ENCODE measurements at regions of chr20 and their contacts with region 1.

Region 1: DNA sequence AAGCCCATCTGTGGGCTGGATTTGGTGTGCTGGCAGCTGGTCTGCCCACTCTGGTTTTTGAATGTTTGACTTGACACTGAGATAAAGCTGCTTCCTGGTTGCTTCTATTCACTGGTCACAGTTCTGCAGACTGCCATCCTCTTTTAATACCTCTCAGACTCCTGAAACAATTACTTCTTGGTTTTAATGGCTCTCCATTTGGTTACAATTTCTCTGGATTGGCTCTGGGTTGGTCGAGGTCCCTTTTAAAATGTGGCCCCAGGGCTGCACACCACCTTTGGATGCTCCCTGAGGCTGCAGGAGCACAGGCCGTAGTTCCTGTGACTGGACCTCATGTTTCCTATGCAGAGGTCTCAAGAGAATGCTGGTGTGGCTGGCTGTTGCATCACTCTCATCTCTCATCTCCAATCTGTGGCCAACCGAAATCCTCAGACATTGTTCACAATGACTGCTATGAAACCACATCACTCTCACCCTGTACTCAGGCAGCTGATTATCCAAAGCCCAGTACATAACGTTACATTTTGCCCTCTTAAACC is 98.5 kb downstream of the INSM1 start:
- DNase-seq: peak; percentile 28
- H3K4me3 ChIP-seq: no peak overlapping the region
- H3K27ac ChIP-seq: no peak overlapping the region
- H3K4me1 ChIP-seq: no peaks in the 10 kb centered on the region
- H3K27me3 ChIP-seq: no peaks in the 10 kb centered on the region
- CTCF ChIP-seq: no peak

Region 2: DNA sequence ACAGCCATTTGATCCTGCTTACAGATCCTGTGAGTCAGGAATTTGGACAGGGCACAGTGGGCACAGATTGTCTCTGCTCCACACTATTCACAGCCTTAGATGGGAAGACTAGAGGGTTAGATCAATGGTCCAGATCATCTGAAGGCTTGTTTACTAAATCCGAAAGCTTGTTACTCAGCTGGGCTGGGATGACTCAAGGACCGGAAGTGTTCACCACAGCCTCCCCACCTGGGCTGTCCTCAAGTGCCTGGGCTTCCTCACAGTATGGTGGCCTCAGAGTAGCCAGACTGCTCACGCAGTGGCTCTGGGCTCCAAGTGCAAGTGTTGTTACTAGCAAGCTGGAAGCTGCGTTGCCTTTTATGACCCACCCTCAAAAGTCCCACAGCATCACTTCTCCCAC is 173.9 kb before region 1 on chr20:
- CTCF ChIA-PET with region 1: no interaction called
- dilution Hi-C with region 1: no loop called
- in situ Hi-C with region 1: no loop called
- intact Hi-C with region 1: no loop called
- DNase-seq: no peak
- H3K4me3 ChIP-seq: no peak overlapping the region
- H3K27ac ChIP-seq: no peak overlapping the region
- H3K4me1 ChIP-seq: no peaks in the 10 kb centered on the region
- H3K27me3 ChIP-seq: peaks cover 3% of the 10 kb centered on the region
- CTCF ChIP-seq: no peak

Region 3: DNA sequence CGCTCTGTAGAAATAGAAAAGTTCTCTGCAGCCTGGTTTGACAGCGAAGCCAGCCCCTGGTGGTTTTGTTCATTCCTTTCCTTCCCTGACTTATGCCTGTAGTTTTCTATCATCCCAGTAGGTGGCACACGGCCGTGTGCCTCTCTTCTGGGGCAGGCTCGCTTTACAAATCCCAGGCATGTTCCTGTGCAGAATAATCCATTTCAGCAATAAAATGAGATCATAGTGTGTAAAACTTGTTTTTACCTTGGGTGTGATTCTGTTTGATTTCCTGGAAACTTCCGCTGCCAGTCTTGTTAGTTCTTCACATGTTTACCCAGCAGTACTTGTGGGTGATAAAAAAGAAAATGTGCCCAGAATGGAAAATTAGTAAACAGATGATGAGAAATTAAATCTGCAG is 105.9 kb before region 1 on chr20:
- CTCF ChIA-PET with region 1: no interaction called
- dilution Hi-C with region 1: no loop called
- in situ Hi-C with region 1: no loop called
- intact Hi-C with region 1: loop called (anchors 10 kb)
- DNase-seq: peak; percentile 60
- H3K4me3 ChIP-seq: no peak overlapping the region
- H3K27ac ChIP-seq: no peak overlapping the region
- H3K4me1 ChIP-seq: no peaks in the 10 kb centered on the region
- H3K27me3 ChIP-seq: peaks cover 37% of the 10 kb centered on the region
- CTCF ChIP-seq: peak; percentile 76 to 87

Measured in mammary epithelial cell (primary cell).